Posterior vena cava (tissue), 2 donors: ENCODE measurements at regions of chr3 and their contacts with region 1.

Region 1: GRCh38 chr3:43294975-43295374 is 8.6 kb downstream of the SNRK start:
- DNase-seq: no peak

Region 2: GRCh38 chr3:43372809-43373559 is 78.0 kb after region 1 on chr3:
- intact Hi-C with region 1: loop called in 1 of 2 experiments (anchors 2 kb)
- DNase-seq: no peak